Pancreas (tissue), 10 donors: ENCODE measurements at regions of chr21 and their contacts with region 1.

Region 1: GRCh38 chr21:21605521-21605920 is 607.3 kb downstream of the NCAM2 start:
- DNase-seq: no peak
- ATAC-seq: no peak
- H3K4me3 ChIP-seq: no peak overlapping the region
- H3K27ac ChIP-seq: no peak overlapping the region
- H3K4me1 ChIP-seq: no peaks in the 10 kb centered on the region
- H3K27me3 ChIP-seq: no peaks in the 10 kb centered on the region
- CTCF ChIP-seq: no peak

Region 2: DNA sequence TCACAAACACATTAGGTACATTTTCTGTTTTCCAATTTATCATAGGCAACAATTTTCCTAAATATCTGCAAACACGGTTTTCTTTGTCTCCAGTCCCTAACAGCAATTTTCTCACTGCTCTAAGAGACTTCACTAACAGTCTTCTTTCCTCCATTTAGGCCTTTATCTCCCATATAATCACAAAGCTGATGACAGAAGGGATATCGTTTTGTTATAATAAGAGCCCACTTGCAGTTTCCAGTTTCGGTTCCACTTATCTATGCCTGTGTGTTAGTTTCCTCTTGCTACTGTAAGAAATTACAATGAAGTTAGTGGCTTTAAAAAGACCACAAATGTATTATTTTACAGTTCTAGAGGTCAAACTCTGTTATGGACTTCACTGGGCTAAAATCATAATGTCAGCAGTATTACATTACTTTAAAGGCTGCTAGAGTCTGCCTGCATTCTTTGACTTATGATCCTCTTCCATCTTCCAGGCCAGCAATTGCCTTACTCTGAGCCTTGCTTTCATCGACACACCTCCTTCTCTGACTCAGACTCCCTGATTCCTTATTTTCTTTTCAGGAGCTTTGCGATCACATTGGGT is 58.1 kb before region 1 on chr21:
- intact Hi-C with region 1: loop called in 1 of 3 experiments (anchors 10 kb)
- DNase-seq: no peak
- ATAC-seq: no peak
- H3K4me3 ChIP-seq: no peak overlapping the region
- H3K27ac ChIP-seq: no peak overlapping the region
- H3K4me1 ChIP-seq: no peaks in the 10 kb centered on the region
- H3K27me3 ChIP-seq: no peaks in the 10 kb centered on the region
- CTCF ChIP-seq: no peak

Region 3: GRCh38 chr21:21673959-21674358 is 68.4 kb after region 1 on chr21:
- intact Hi-C with region 1: no loop called
- DNase-seq: no peak
- ATAC-seq: no peak
- H3K4me3 ChIP-seq: no peak overlapping the region
- H3K27ac ChIP-seq: no peak overlapping the region
- H3K4me1 ChIP-seq: no peaks in the 10 kb centered on the region
- H3K27me3 ChIP-seq: no peaks in the 10 kb centered on the region
- CTCF ChIP-seq: no peak

Region 4: DNA sequence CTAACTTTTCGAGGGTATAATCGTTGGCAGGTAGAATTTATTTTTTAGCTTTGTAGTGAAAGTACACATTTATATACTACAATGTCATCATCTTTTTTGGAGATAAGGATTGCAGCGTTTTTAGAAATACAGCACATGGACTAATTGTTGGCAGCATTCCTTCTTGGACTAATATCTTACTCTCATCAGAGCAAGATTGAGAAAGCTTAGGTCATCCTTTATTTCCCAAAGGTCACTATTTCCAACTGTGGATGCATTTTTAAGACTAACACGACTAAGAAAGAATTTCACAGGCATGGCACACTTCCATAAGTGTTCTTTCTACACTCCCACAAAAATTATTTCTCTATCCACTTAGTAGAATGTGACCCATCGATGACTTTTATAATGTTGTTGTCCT is 125.0 kb after region 1 on chr21:
- intact Hi-C with region 1: no loop called
- DNase-seq: no peak
- ATAC-seq: peak in 1 of 4 donors; percentile 32
- H3K4me3 ChIP-seq: no peak overlapping the region
- H3K27ac ChIP-seq: no peak overlapping the region
- H3K4me1 ChIP-seq: no peaks in the 10 kb centered on the region
- H3K27me3 ChIP-seq: peaks cover 0 to 2% (median 0%) of the 10 kb centered on the region in 4 donors
- CTCF ChIP-seq: no peak